SK-MEL-5 (cell line): ENCODE measurements at regions of chr3 and their contacts with region 1.

Region 1: DNA sequence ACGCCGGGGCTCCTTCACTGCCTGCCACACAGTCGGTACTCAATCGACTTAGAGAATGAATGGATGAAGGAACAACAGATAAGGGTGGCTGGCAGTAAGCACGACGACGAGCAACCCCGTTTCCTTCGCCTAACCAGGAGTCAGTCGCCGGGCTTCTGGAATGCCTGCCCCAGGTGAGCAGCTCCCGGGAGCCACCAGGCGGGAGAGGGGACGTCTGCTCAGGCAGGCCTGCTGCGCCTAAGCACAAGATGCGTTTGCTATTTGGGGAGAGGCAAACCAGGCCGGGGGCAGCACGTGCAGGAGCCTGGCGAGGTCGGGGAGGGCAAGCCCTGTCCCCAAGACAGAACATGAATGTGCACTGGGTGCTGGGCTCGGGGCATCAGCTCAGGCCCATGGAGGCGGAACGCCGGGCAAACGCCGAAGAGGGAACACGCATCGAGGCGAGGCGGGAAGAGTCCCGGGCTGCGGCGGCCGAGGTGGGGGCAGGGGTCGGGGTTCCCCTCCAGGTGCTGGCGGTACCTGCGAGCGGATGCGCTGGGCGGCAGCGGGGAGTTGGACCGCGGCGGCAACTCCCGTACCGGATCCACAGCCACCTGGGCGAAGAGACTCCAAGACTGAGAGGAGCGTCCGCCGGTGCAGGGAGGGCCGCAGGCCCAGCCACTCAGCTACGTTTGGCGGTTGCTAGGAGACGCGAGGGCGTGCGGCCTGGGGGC is at the start of gene CFAP92:
- DNase-seq: no peak
- total RNA-seq, gene CFAP92: 0.16 TPM in 1 of 2 replicates, not detected in the other

Region 2: DNA sequence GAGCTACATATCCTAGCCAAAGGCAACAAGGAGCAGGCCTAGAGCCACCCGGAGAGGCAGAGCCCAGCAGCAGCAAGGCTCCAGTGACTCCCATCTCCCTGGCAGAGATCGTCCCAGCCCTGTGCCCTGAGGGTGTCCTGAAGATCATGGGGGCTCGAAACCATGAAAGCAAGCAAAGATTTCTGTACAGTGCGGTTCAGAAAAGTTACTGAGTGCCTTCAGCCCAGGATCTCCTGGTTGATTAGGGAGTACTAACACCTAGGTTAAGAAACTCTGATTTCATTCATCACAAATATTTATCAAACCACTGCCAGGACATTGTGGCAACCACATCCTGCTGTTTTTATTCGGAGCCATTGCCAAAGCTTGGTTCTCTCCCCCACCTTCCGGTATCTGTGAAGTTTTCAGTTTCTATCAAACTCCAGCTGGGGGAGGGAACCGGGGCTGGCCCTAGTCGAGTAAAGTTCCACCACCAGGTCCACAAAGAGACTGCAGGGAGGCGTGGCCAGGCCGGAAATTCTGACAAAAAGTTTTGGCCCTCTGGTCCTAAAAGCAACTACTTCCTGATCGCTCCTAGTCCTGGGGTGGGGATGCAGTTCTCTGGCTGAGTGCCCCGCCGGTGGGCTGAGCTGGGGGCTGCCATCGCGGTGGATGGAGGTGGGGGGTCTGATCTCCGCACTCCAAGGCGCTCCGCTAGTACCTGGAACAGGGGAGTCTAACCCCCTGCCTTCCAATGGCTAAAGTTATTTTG is 126.8 kb after region 1 on chr3:
- in situ Hi-C with region 1: loop called (anchors 10 kb)
- DNase-seq: peak; percentile 84